Tibial artery (tissue), 4 donors: ENCODE measurements at regions of chr10 and their contacts with region 1.

Region 1: DNA sequence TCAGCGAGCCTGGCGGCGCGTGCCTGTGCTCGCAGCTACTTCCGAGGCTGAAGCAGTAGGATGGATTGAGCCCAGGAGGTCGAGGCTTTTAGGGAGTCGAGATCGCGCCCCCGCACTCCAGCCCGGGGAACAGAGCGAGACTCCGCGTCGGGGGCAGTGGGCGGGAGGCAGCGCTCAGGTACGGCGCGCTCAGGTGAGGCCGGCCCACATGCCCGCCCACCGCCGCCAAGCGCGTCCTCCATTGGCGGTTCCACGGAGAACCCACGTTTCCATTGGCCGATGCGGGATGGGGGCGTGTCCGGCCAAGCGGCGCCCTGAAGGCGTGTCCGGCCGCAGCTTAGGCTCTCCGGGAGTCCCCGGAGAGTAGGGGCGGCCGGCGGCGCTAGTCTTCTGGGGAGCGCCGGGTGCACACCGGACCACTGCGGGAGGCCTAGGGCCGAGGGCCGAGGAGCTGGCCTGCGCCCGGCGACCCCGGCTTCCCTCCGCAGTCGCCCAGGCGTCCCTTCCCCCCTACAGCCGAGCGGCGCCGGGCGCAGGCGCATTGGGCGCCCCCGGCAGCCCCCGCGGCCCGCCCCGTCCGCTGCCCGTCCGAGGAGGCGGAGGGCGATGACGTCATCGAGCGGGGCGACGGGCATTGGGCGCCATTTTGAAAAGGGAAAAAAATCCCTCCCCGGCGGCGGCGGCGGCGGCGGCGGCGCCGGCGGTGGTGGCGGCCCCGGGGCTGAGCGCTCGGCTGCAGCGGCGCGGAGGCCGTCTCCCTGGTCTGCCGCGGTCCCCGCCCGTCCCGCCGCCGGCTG is at the start of gene PPP2R2D:
- DNase-seq: peak; percentile 91 to 96
- H3K4me3 ChIP-seq: peak within 1 kb of the TSS; percentile 96 to 97
- H3K27ac ChIP-seq: peak within 1 kb of the TSS; percentile 86 to 95
- H3K4me1 ChIP-seq: peaks cover 0 to 43% (median 24%) of the 10 kb centered on the region in 4 donors
- H3K27me3 ChIP-seq: peaks cover 0 to 26% of the 10 kb centered on the region in 2 donors
- CTCF ChIP-seq: no peak

Region 2: DNA sequence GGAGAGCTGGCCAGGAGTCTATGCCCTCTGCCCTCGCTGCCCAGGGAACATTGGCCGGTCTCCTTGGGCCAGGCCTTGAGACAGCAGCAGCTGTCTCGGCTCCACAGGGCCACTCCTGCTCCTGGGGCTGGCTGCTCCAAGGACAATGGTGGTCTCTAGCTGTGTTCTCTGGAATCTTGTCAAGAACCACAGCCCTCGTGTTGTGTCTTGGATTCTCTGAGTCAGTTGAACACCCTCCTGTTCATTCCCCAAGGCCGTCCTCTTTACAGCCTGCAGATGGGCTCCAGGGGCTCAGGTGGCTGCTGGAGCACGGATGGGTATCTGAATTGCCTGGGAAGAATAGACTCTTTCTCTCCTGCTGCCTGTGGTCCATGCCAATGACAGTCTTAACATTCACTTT is 1253.2 kb before region 1 on chr10:
- intact Hi-C with region 1: no loop called
- DNase-seq: no peak
- H3K4me3 ChIP-seq: no peak overlapping the region
- H3K27ac ChIP-seq: no peak overlapping the region
- H3K4me1 ChIP-seq: no peaks in the 10 kb centered on the region
- H3K27me3 ChIP-seq: no peaks in the 10 kb centered on the region
- CTCF ChIP-seq: no peak

Region 3: GRCh38 chr10:130875897-130876472 is 1024.6 kb before region 1 on chr10:
- intact Hi-C with region 1: no loop called
- DNase-seq: no peak
- H3K4me3 ChIP-seq: no peak overlapping the region
- H3K27ac ChIP-seq: no peak overlapping the region
- H3K4me1 ChIP-seq: no peaks in the 10 kb centered on the region
- H3K27me3 ChIP-seq: no peaks in the 10 kb centered on the region
- CTCF ChIP-seq: no peak

Region 4: DNA sequence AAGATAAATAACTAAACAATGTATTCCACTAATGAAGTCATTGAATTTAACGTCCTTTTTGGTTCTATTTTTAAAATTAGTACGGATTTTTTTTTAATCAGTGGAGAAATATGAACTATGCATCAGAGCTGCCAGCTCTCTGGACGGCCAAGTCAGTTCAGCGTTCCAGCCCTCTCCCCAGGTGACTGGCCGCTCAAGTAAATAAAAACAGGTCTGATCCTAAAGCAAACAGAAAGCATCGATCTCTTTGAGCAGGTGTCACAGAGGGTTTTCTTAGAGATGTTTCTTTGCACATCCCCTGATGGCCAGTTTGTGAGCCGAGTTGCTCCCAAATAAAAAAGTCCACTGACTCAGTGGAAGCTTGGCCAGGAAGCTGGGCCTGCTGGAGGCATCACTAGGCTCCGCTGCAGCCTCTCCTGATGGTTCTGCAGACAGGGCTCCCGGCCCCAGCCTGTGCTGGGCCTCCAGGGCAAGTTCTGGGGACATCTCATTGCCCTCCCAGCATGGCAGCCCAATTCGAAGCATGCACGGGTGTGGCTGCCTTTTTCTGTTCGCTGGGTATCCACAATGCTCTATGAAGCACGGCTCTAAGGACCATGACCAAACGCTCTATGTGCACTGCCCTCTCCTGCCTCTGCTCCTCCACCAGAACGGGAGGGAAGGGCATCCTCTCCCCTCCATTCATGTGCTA is 74.4 kb before region 1 on chr10:
- intact Hi-C with region 1: no loop called
- DNase-seq: peak in 1 of 2 donors; percentile 48
- H3K4me3 ChIP-seq: no peak overlapping the region
- H3K27ac ChIP-seq: no peak overlapping the region
- H3K4me1 ChIP-seq: no peaks in the 10 kb centered on the region
- H3K27me3 ChIP-seq: peaks cover 0 to 35% of the 10 kb centered on the region in 2 donors
- CTCF ChIP-seq: no peak

Region 5: DNA sequence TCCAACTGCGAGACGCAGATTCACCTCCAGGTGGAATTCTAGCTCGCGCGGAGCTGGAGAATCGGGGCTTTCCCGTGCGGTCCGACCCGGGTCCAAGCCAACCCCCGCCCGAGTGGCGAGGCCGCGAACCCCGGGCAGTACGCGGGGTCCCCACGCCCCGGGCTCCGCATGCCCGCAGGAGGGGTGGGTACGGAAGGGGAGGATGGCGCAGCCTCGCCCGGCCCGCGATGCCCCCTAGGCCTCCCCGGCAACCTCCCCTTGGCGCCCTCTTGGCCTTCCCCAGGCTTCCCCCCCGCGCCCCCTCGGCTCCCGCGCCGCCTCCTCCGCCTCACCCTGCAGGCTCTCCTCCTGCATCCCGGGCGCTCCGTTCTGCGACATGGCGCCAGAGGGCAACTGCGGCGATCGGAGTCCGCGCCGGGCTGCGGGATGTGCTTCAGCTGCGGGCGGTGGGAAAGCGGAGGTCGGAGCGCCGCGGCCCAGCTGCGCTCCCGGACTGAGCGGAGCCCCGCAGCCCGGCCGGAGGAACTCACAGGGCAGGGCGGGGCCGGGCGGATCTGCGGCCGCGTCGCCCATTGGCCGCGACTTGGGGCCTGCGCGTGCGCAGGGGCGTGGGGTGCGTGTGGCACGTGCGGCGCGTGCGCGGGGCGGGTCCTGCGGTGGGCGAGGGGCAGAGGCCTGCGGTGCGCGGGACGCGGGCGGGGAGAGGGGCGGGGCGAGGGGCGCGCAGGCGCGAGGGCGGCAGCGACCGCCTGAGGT is 81.1 kb after region 1 on chr10 and contains the start of gene BNIP3:
- intact Hi-C with region 1: loop called (anchors 2 kb)
- DNase-seq: peak; percentile 93 to 96
- H3K4me3 ChIP-seq: peak within 1 kb of the TSS; percentile 93
- H3K27ac ChIP-seq: peak within 1 kb of the TSS; percentile 72 to 82
- H3K4me1 ChIP-seq: peaks cover 0 to 28% (median 14%) of the 10 kb centered on the region in 4 donors
- H3K27me3 ChIP-seq: no peaks in the 10 kb centered on the region
- CTCF ChIP-seq: peak in 1 of 2 experiments; percentile 4

Region 6: DNA sequence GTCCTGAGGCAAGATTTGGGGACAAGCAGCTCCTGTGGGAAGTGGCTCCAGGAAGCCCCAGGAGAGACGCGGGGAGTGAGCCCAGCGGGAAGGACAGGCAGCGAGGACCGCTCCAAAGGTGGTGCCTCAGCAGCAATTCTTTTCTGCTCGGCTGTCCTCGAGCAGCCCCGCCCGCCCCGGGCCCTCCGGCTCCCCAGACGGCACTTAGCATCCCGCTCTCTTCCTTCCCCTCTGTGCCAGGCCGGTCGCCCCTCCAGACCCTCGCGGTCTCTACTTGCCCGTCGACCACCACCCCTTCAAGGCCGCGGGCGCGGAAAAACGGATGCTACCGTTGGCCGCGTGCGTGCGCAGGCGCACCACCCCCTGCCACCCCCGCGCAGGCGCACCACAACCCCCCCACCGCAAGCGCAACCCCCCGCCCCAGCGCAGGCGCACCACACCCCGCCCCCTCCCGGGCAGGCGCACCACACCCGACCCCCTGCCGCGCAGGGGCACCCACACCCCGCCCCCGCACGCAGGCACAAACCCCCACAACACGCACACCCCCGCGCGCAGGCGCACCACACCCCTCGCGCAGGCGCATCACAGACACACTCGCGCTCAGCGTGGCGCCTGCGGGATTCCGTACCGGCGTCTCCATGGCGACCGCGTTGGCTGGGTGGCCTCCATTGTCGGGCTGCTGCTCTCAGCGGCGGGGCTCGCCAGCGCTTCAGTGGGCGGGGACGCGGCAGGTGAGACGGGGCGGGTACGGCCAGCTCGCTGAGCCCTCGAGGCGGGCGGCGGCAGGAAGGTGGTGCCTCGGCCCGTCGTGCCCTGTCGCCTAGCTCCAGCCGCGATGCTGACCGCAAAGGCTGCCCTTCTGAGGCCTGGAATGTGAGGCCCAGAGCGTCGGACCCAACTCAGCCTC is 431.2 kb after region 1 on chr10 and contains the start of gene LRRC27:
- intact Hi-C with region 1: loop called (anchors 10 kb)
- DNase-seq: peak; percentile 97 to 99
- H3K4me3 ChIP-seq: peak within 1 kb of the TSS; percentile 76 to 78
- H3K27ac ChIP-seq: peak within 1 kb of the TSS; percentile 74 to 83
- H3K4me1 ChIP-seq: peaks cover 0 to 35% (median 23%) of the 10 kb centered on the region in 4 donors
- H3K27me3 ChIP-seq: no peaks in the 10 kb centered on the region
- CTCF ChIP-seq: no peak